MCF 10A (cell line): ENCODE measurements at regions of chr12 and their contacts with region 1.

Region 1: DNA sequence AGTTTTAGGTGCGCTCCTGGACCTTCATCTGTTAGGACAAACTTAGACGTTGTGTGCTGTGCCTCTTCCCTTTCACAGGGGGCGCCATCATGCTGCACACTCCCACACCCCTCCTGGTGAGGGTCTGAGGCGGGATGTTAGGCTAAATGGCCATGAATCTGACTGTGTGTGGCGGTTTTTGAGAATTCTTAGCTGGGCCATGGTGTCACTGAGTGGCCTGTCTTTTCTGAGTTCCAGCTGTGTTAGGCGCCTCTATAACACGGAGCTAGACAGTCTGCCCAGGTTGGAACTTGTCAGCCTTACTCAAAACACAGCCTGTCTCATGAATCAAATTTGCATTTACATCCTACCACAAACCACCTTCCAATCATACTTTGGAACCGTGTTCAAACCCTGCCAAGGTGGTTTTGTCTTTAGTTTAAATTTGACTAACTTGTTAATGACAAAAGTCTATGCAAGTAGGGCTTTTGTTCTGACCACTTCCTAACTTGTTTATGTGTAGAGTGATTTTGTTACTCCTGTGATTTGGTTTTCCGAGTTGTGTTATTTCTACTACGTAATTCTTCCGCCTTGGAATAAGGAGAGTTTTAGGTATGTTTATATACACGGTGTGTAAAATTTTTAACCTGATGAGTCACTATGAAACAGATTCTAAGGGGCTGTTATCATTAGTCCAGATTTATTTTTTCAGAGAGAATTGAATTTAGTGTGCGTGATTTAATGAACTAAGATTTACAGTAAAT is 19.6 kb downstream of the ACVR1B start:
- DNase-seq: peak; percentile 61
- H3K4me3 Mint-ChIP-seq: peak overlapping the region; percentile 65
- H3K27ac Mint-ChIP-seq: peak overlapping the region; percentile 99
- H3K4me1 Mint-ChIP-seq: peaks cover 55% of the 10 kb centered on the region
- H3K27me3 Mint-ChIP-seq: no peaks in the 10 kb centered on the region
- CTCF ChIP-seq: peak; percentile 50

Region 2: DNA sequence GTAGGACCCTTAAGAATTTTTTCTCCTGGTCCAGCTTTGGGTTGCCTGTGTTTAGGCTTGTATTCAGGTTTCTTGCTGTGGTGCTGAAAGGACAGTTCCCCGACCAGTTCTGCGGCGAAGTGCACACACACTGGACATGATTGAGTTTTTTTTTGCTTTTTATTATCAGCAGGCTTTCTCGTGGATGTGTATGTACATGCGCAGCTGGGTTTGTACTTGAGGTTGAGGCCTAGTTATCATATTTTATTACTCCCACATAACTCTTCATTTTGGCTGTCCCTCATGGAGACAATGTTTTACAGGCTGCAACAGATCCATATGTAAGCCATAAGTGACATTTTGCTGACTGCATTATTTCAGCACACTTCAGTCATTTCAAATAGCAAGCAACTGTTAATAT is 377.5 kb before region 1 on chr12:
- CTCF ChIA-PET with region 1: no interaction called
- POLR2A ChIA-PET with region 1: no interaction called
- intact Hi-C with region 1: no loop called
- DNase-seq: peak; percentile 51
- H3K4me3 Mint-ChIP-seq: no peak overlapping the region
- H3K27ac Mint-ChIP-seq: no peak overlapping the region
- H3K4me1 Mint-ChIP-seq: peaks cover 4% of the 10 kb centered on the region
- H3K27me3 Mint-ChIP-seq: peaks cover 89% of the 10 kb centered on the region
- CTCF ChIP-seq: no peak

Region 3: GRCh38 chr12:51951199-51951842 is 19.8 kb before region 1 on chr12 and contains the start of gene ACVR1B:
- CTCF ChIA-PET with region 1: interaction called, 7 read pairs
- POLR2A ChIA-PET with region 1: interaction called, 39 read pairs
- intact Hi-C with region 1: no loop called
- DNase-seq: peak; percentile 82
- H3K4me3 Mint-ChIP-seq: peak within 1 kb of the TSS; percentile 89
- H3K27ac Mint-ChIP-seq: peak within 1 kb of the TSS; percentile 87
- H3K4me1 Mint-ChIP-seq: peaks cover 36% of the 10 kb centered on the region
- H3K27me3 Mint-ChIP-seq: peaks cover 12% of the 10 kb centered on the region
- CTCF ChIP-seq: no peak
- total RNA-seq, gene ACVR1B: 14.7 and 16.1 TPM in 2 replicates

Region 4: GRCh38 chr12:51959211-51959610 is 11.9 kb before region 1 on chr12:
- CTCF ChIA-PET with region 1: interaction called, 9 read pairs
- POLR2A ChIA-PET with region 1: interaction called, 39 read pairs
- intact Hi-C with region 1: no loop called
- DNase-seq: no peak
- H3K4me3 Mint-ChIP-seq: no peak overlapping the region
- H3K27ac Mint-ChIP-seq: no peak overlapping the region
- H3K4me1 Mint-ChIP-seq: peaks cover 39% of the 10 kb centered on the region
- H3K27me3 Mint-ChIP-seq: no peaks in the 10 kb centered on the region
- CTCF ChIP-seq: no peak